ENCODE measurements at regions of chr17 and their contacts with region 1.

Region 1: GRCh38 chr17:18141210-18141803 is 32.8 kb downstream of the MYO15A start:
- DNase-seq: peak; percentile 52
- ATAC-seq: peak; percentile 68
- H3K4me3 Mint-ChIP-seq: no peak overlapping the region
- H3K27ac Mint-ChIP-seq: no peak overlapping the region
- H3K4me1 Mint-ChIP-seq: no peaks in the 10 kb centered on the region
- H3K27me3 Mint-ChIP-seq: no peaks in the 10 kb centered on the region

Region 2: GRCh38 chr17:18217412-18218015 is 76.2 kb after region 1 on chr17:
- CTCF ChIA-PET with region 1: interaction called, 23 read pairs
- POLR2A ChIA-PET with region 1: no interaction called
- intact Hi-C with region 1: loop called (anchors 1 to 2 kb)
- DNase-seq: peak; percentile 87
- ATAC-seq: peak; percentile 90
- H3K4me3 Mint-ChIP-seq: no peak overlapping the region
- H3K27ac Mint-ChIP-seq: no peak overlapping the region
- H3K4me1 Mint-ChIP-seq: no peaks in the 10 kb centered on the region
- H3K27me3 Mint-ChIP-seq: no peaks in the 10 kb centered on the region